Esophagus muscularis mucosa (tissue), 4 donors: ENCODE measurements at regions of chr3 and their contacts with region 1.

Region 1: GRCh38 chr3:88203642-88204055 is 53.9 kb downstream of the C3orf38 start:
- DNase-seq: no peak
- H3K4me3 ChIP-seq: no peak overlapping the region
- H3K27ac ChIP-seq: no peak overlapping the region
- H3K4me1 ChIP-seq: peaks cover 0 to 3% (median 0%) of the 10 kb centered on the region in 4 donors
- H3K27me3 ChIP-seq: no peaks in the 10 kb centered on the region
- CTCF ChIP-seq: peak; percentile 67 to 84 (median 79)
- EP300 ChIP-seq: no peak
- POLR2A ChIP-seq: no peak

Region 2: DNA sequence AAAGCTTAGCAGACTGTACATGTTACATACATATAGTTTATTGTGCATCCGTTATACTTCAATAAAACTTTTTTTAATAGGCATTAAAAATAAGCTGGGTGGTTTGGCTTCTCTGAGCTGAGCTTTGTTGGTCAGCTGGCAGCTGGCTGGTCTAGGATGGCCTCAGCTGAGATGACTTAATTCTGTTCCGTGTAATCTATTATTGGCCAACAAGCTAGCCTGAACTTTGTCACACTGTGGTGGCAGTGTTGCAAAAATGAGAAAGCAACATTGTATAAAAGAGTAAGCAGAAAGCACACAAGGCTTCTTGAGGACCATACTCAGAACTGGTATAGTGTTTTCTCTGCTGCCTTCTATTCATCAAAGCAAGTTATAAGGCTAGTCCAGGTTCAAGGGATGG is 190.1 kb before region 1 on chr3:
- intact Hi-C with region 1: no loop called
- DNase-seq: no peak
- H3K4me3 ChIP-seq: no peak overlapping the region
- H3K27ac ChIP-seq: no peak overlapping the region
- H3K4me1 ChIP-seq: no peaks in the 10 kb centered on the region
- H3K27me3 ChIP-seq: no peaks in the 10 kb centered on the region
- CTCF ChIP-seq: no peak
- EP300 ChIP-seq: no peak
- POLR2A ChIP-seq: no peak

Region 3: DNA sequence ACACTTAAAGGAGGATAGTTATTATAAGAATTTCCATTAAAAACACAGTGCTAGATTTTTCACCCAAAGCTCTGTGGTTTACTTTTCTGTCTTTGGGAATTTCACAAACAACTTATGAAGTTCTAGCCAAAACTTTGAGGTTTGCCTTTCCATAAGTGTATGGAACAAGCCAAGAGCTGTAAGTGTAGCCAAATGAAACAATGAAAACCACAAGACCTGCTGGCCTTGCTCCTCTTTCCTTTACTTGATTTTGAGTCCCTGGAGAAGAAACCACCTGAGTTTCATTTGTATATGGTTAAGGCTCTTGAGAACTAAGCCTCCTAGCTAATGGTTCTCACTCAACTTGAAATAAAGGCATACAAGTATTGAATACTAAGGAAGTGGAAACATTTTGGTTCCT is 538.5 kb after region 1 on chr3:
- intact Hi-C with region 1: no loop called
- DNase-seq: no peak
- H3K4me3 ChIP-seq: no peak overlapping the region
- H3K27ac ChIP-seq: no peak overlapping the region
- H3K4me1 ChIP-seq: no peaks in the 10 kb centered on the region
- H3K27me3 ChIP-seq: no peaks in the 10 kb centered on the region
- CTCF ChIP-seq: no peak
- EP300 ChIP-seq: no peak
- POLR2A ChIP-seq: no peak

Region 4: DNA sequence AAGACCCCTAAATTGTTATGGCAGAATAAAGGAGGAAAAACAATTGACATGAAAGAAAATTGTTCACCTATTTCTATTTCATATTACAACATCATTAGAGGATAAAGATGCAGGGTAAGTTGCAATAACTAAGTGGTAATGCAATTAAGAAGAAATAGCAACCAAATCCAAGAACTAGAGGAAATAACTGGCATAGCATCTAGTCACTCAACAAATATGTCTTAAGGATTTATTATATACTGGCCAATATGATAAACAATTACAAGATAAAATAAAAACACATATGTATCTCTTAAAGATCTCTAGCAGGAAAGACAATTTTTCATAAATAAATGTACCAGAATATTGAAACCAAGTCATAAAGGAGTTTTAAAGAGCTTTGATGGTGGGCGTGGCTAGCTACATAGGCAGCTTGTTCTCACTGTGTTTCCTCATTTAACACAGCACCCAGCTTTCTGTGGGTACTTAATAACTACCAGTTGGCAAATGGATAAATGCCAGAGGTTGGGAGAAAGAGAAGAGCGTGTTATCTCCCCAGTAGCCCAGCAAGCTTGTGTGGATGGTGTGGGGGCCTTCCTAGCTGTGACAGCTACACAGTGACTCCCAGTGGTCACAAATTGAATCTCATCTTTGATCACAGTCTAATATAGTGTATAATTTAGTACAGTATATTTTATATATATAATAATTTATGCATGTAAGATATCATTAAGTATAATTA is 1887.7 kb after region 1 on chr3:
- intact Hi-C with region 1: loop called (anchors 5 kb)
- DNase-seq: no peak
- H3K4me3 ChIP-seq: no peak overlapping the region
- H3K27ac ChIP-seq: no peak overlapping the region
- H3K4me1 ChIP-seq: peaks cover 0 to 14% (median 1%) of the 10 kb centered on the region in 4 donors
- H3K27me3 ChIP-seq: no peaks in the 10 kb centered on the region
- CTCF ChIP-seq: peak; percentile 47 to 59 (median 50)
- EP300 ChIP-seq: no peak
- POLR2A ChIP-seq: no peak

Region 5: GRCh38 chr3:90184861-90185260 is 1981.2 kb after region 1 on chr3:
- intact Hi-C with region 1: loop called (anchors 5 kb)
- DNase-seq: no peak
- H3K4me3 ChIP-seq: no peak overlapping the region
- H3K27ac ChIP-seq: no peak overlapping the region
- H3K4me1 ChIP-seq: no peaks in the 10 kb centered on the region
- H3K27me3 ChIP-seq: no peaks in the 10 kb centered on the region
- CTCF ChIP-seq: no peak
- EP300 ChIP-seq: no peak
- POLR2A ChIP-seq: no peak